ENCODE measurements at regions of chr3 and their contacts with region 1.

Region 1: GRCh38 chr3:47475570-47476329 is at the start of gene SCAP:
- DNase-seq: peak; percentile 67 to 96
- H3K4me3 ChIP-seq: peak within 1 kb of the TSS; percentile 84 to 88
- H3K27ac ChIP-seq: peak within 1 kb of the TSS; percentile 81 to 90
- H3K4me1 ChIP-seq: peaks cover 8 to 15% of the 10 kb centered on the region in 2 donors
- H3K27me3 ChIP-seq: no peaks in the 10 kb centered on the region
- CTCF ChIP-seq: peak; percentile 93 to 99 (median 97)
- total RNA-seq, gene SCAP: 155 TPM

Region 2: DNA sequence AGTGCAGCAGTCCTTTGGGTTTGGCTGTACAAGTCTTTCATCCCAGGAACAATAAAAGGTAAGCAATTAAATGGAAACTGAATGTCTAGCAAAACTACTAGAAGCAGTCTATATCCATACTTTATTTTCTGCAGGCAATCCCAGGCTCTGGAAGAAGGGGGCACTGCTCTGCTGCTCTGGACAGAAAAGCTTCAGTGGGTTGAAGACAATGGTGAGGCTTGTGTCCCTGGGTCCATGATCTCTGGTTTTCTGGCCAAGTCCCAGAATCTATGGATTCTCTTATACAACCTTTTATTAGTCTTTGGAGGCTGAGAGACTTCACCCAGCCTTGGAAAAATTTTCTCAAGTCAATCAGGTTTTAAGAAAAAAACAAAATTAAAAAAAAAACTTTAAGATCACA is 35.6 kb before region 1 on chr3:
- intact Hi-C with region 1: loop called (anchors 5 kb)
- DNase-seq: peak in 1 of 2 donors; percentile 12
- H3K4me3 ChIP-seq: no peak overlapping the region
- H3K27ac ChIP-seq: no peak overlapping the region
- H3K4me1 ChIP-seq: peaks cover 0 to 3% of the 10 kb centered on the region in 2 donors
- H3K27me3 ChIP-seq: no peaks in the 10 kb centered on the region
- CTCF ChIP-seq: no peak

Region 3: GRCh38 chr3:47522082-47522987 is 46.6 kb after region 1 on chr3:
- intact Hi-C with region 1: no loop called
- DNase-seq: peak in 1 of 2 donors; percentile 89
- H3K4me3 ChIP-seq: no peak overlapping the region
- H3K27ac ChIP-seq: no peak overlapping the region
- H3K4me1 ChIP-seq: no peaks in the 10 kb centered on the region
- H3K27me3 ChIP-seq: no peaks in the 10 kb centered on the region
- CTCF ChIP-seq: peak; percentile 85 to 91 (median 89)

Region 4: GRCh38 chr3:47634996-47635395 is 159.2 kb after region 1 on chr3:
- intact Hi-C with region 1: no loop called
- DNase-seq: no peak
- H3K4me3 ChIP-seq: no peak overlapping the region
- H3K27ac ChIP-seq: peak overlapping the region in 1 of 2 donors; percentile 22
- H3K4me1 ChIP-seq: no peaks in the 10 kb centered on the region
- H3K27me3 ChIP-seq: no peaks in the 10 kb centered on the region
- CTCF ChIP-seq: no peak

Measured in ascending aorta (tissue), 2 donors.